HepG2 (cell line): ENCODE measurements at regions of chr14 and their contacts with region 1.

Region 1: GRCh38 chr14:50550286-50550685 is 9.7 kb upstream of the ATL1 start:
- DNase-seq: no peak
- ATAC-seq: no peak
- H3K4me3 ChIP-seq: no peak overlapping the region
- H3K27ac ChIP-seq: no peak overlapping the region
- H3K4me1 ChIP-seq: peaks cover 8% of the 10 kb centered on the region
- H3K27me3 ChIP-seq: no peaks in the 10 kb centered on the region; a peak in 1 of 5 replicates
- CTCF ChIP-seq: no peak
- EP300 ChIP-seq: no peak
- POLR2A ChIP-seq: no peak
- RAD21 ChIP-seq: no peak

Region 2: GRCh38 chr14:50520947-50521815 is 29.1 kb before region 1 on chr14:
- CTCF ChIA-PET with region 1: no interaction called
- POLR2A ChIA-PET with region 1: no interaction called
- in situ Hi-C with region 1: no loop called
- intact Hi-C with region 1: no loop called
- DNase-seq: no peak
- ATAC-seq: no peak
- H3K4me3 ChIP-seq: no peak overlapping the region
- H3K27ac ChIP-seq: no peak overlapping the region
- H3K4me1 ChIP-seq: peaks cover 25% of the 10 kb centered on the region
- H3K27me3 ChIP-seq: no peaks in the 10 kb centered on the region
- CTCF ChIP-seq: no peak
- EP300 ChIP-seq: no peak
- POLR2A ChIP-seq: no peak
- RAD21 ChIP-seq: no peak

Region 3: DNA sequence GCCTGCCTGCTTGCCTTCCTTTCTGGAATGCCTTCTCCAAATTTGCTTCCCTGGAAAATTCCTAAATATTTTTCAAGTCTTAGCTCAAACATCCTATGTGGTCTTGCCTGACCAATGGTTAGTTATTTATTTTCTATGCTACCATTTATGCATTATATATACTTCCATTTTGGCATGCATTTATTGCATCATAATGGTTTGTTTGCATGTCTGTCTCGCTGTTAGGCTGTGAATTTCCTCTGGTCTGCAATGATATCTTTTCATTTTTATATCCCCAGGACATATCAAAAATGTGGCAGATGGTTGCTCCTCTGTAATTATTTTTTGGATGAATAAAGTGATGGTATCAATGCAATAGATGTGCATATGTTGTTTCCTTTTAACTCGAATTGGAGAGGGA is 40.2 kb after region 1 on chr14:
- CTCF ChIA-PET with region 1: no interaction called
- POLR2A ChIA-PET with region 1: no interaction called
- in situ Hi-C with region 1: no loop called
- intact Hi-C with region 1: loop called (anchors 1 kb)
- DNase-seq: no peak
- ATAC-seq: no peak
- H3K4me3 ChIP-seq: no peak overlapping the region
- H3K27ac ChIP-seq: no peak overlapping the region
- H3K4me1 ChIP-seq: peaks cover 16% of the 10 kb centered on the region
- H3K27me3 ChIP-seq: no peaks in the 10 kb centered on the region
- CTCF ChIP-seq: no peak
- EP300 ChIP-seq: no peak
- POLR2A ChIP-seq: no peak
- RAD21 ChIP-seq: no peak